ENCODE measurements at regions of chr2 and their contacts with region 1.

Region 1: GRCh38 chr2:235512699-235513053 is 18.8 kb downstream of the AGAP1 start:
- DNase-seq: no peak
- H3K4me3 ChIP-seq: no peak overlapping the region
- H3K27ac ChIP-seq: no peak overlapping the region
- H3K4me1 ChIP-seq: peaks cover 7% of the 10 kb centered on the region
- H3K27me3 ChIP-seq: no peaks in the 10 kb centered on the region
- CTCF ChIP-seq: no peak

Region 2: DNA sequence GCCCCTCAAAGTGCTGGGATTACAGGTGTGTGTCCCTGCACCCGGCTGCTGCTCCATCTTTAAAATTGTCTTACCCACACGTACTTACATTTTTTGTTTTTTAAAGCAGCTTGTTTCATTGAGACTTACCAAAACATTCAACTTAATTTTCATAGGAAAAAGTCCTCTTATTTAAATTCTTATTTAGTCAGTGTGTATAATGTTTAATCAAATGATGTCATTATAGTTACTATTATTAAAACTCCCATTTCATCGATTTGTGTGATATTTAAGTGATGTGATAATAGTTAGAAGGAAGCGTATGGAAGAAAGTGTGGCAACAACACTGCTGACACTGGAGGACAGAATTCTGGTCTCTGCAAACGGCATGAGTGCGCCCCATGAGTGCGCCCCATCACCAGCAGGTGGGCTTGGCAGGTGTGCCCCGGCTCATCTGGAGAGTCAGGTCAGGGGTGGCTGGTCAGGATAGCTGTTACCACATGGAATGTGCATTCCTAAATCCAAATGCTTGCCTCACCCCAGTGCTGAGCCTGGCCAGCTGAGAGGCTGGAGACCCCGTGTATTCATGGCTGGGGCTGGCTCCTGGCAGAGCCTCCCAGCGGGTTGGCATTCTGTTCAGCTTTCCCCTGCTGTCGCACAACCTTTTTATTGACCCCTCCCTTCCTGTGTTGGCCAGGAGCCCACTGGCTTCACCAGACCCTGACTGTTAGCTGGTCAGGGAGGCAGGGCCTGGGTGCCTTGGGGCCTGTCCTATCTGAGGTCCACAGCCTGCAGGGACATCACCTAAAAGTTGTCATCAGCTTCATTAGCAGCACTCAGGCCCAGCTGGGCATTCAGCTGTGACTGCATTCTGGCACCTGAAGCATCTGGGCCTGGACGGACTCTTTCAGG is 60.9 kb after region 1 on chr2:
- CTCF ChIA-PET with region 1: no interaction called
- POLR2A ChIA-PET with region 1: interaction called, 13 read pairs
- intact Hi-C with region 1: no loop called
- DNase-seq: no peak
- H3K4me3 ChIP-seq: no peak overlapping the region
- H3K27ac ChIP-seq: no peak overlapping the region
- H3K4me1 ChIP-seq: peaks cover 3% of the 10 kb centered on the region
- H3K27me3 ChIP-seq: no peaks in the 10 kb centered on the region
- CTCF ChIP-seq: no peak

Region 3: GRCh38 chr2:235779444-235779896 is 266.8 kb after region 1 on chr2:
- CTCF ChIA-PET with region 1: no interaction called
- POLR2A ChIA-PET with region 1: no interaction called
- intact Hi-C with region 1: no loop called
- DNase-seq: peak; percentile 68
- H3K4me3 ChIP-seq: no peak overlapping the region
- H3K27ac ChIP-seq: no peak overlapping the region
- H3K4me1 ChIP-seq: no peaks in the 10 kb centered on the region
- H3K27me3 ChIP-seq: no peaks in the 10 kb centered on the region
- CTCF ChIP-seq: peak; percentile 90